B cell (primary cell): ENCODE measurements at regions of chr17 and their contacts with region 1.

Region 1: GRCh38 chr17:42997984-42998938 is at the start of gene RPL27:
- DNase-seq: peak; percentile 99
- ATAC-seq: peak; percentile 94
- H3K4me3 ChIP-seq: peak within 1 kb of the TSS; percentile 70 to 94 (median 84)
- H3K4me3 Mint-ChIP-seq: peak within 1 kb of the TSS; percentile 96
- H3K27ac ChIP-seq: peak within 1 kb of the TSS; percentile 89 to 96
- H3K27ac Mint-ChIP-seq: peak within 1 kb of the TSS; percentile 88
- H3K4me1 ChIP-seq: peaks cover 20 to 22% of the 10 kb centered on the region in 2 donors
- H3K4me1 Mint-ChIP-seq: peaks cover 37% of the 10 kb centered on the region
- H3K27me3 ChIP-seq: no peaks in the 10 kb centered on the region
- H3K27me3 Mint-ChIP-seq: no peaks in the 10 kb centered on the region
- CTCF ChIP-seq: peak; percentile 89
- total RNA-seq, gene RPL27: 925 and 1,087 TPM in 2 replicates

Region 2: GRCh38 chr17:42609182-42609813 is 389.0 kb before region 1 on chr17 and contains the starts of genes RETREG3 and TUBG1:
- CTCF ChIA-PET with region 1: no interaction called
- POLR2A ChIA-PET with region 1: no interaction called
- intact Hi-C with region 1: loop called (anchors 1 kb)
- DNase-seq: peak; percentile 100
- ATAC-seq: peak; percentile 91
- H3K4me3 ChIP-seq: peak within 1 kb of the TSS; percentile 73 to 95 (median 85)
- H3K4me3 Mint-ChIP-seq: peak within 1 kb of the TSS; percentile 100
- H3K27ac ChIP-seq: peak within 1 kb of the TSS; percentile 79 to 95
- H3K27ac Mint-ChIP-seq: peak within 1 kb of the TSS; percentile 98
- H3K4me1 ChIP-seq: peaks cover 38 to 42% of the 10 kb centered on the region in 2 donors
- H3K4me1 Mint-ChIP-seq: peaks cover 51% of the 10 kb centered on the region
- H3K27me3 ChIP-seq: no peaks in the 10 kb centered on the region
- H3K27me3 Mint-ChIP-seq: no peaks in the 10 kb centered on the region
- CTCF ChIP-seq: peak; percentile 37
- total RNA-seq, gene RETREG3: 103 and 108 TPM in 2 replicates
- total RNA-seq, gene TUBG1: 15.7 and 17.2 TPM in 2 replicates

Region 3: DNA sequence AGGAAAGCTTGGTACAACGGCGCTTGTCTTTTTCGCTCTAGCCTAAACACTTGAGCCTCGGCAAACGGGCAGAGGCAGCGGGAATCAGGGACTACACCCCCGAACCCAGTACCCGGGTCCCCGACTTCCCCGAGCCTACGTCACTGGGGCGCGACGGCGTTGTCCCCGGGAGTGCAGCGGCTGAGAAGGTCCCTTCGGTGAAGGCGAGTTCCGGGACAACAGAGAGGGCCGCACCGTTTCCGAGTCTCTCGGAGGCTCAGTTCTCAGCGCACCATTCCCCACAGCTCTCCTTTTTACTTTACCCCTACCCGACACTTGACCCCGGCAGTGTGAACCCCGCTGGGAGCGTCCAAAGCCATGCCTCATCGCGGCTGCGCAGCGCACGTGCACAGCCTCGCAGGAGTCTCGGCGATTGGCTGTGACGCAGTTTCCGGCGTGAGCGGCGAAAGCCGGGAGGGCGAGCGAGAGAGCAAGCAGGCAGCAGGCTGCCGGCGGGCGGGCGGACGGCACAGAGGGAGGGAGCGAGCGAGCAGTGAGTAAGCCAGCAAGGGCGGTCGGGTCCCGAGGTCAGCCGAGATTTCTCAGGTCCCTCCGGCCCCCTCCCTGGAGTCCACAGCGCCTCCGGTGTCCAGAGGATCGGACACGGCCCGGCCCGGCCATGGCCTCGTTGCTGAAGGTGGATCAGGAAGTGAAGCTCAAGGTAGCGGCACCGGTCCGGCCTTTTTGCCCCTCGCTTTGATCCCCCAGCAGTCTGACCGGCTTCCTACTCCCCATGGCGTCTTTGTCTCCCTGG is 165.1 kb before region 1 on chr17 and contains the start of gene PSME3:
- CTCF ChIA-PET with region 1: interaction called, 7 read pairs
- POLR2A ChIA-PET with region 1: interaction called, 3 read pairs
- intact Hi-C with region 1: loop called (anchors 1 kb)
- DNase-seq: peak; percentile 95
- ATAC-seq: peak; percentile 93
- H3K4me3 ChIP-seq: peak within 1 kb of the TSS; percentile 88 to 99 (median 92)
- H3K4me3 Mint-ChIP-seq: peak within 1 kb of the TSS; percentile 98
- H3K27ac ChIP-seq: peak within 1 kb of the TSS; percentile 84 to 94
- H3K27ac Mint-ChIP-seq: peak within 1 kb of the TSS; percentile 98
- H3K4me1 ChIP-seq: peaks cover 12 to 20% of the 10 kb centered on the region in 2 donors
- H3K4me1 Mint-ChIP-seq: peaks cover 24% of the 10 kb centered on the region
- H3K27me3 ChIP-seq: no peaks in the 10 kb centered on the region
- H3K27me3 Mint-ChIP-seq: no peaks in the 10 kb centered on the region
- CTCF ChIP-seq: no peak
- total RNA-seq, gene PSME3: 70.3 and 76.2 TPM in 2 replicates

Region 4: DNA sequence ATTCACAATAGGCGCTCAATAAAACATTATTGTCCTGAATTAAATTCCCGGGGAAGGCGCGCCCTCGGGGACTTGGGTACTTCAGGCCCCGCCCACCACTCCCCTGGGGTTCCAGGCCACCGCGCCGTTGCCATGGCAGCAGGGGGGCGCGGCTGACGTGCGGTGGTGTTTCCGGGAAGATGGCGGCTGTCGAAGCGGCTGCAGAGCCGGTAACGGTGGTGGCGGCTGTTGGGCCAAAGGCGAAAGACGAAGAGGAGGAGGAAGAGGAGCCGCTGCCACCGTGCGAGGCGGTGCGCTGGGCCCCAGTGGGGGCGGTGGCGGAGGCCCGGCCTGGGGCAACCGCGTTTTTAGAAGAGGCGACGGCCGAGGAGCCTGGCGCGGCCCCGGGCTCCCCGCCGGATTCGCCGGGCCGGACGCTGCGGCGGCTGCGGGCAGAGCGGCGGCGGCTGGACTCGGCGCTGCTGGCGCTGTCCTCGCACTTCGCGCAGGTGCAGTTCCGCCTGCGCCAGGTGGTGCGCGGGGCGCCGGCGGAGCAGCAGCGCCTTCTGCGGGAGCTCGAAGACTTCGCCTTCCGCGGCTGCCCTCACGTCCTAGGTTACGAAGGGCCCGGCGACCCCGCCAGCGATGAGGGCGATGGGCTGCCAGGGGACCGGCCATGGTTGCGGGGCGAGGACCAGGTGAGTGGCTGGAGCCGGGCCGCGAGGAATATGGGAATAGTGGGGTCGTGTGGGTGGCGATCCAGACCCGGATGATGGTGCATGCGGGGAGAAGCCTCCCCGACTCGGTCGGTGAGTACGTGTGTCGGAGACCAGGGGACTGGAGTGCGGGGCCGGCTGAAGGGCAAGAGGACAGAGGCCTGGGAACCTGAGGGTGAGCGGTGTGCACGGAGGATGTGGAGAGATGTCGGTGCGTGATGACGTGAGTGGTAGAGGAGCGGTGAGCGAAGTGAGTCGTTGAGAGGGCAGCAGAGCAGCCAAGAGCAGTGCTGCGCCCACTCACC is 17.6 kb before region 1 on chr17 and contains the start of gene RUNDC1:
- CTCF ChIA-PET with region 1: interaction called, 54 read pairs
- POLR2A ChIA-PET with region 1: interaction called, 24 read pairs
- intact Hi-C with region 1: loop called (anchors 1 kb)
- DNase-seq: peak; percentile 97
- ATAC-seq: peak; percentile 82
- H3K4me3 ChIP-seq: peak within 1 kb of the TSS; percentile 83 to 90 (median 88)
- H3K4me3 Mint-ChIP-seq: peak within 1 kb of the TSS; percentile 99
- H3K27ac ChIP-seq: peak within 1 kb of the TSS; percentile 80 to 86
- H3K27ac Mint-ChIP-seq: peak within 1 kb of the TSS; percentile 96
- H3K4me1 ChIP-seq: peaks cover 44 to 56% of the 10 kb centered on the region in 2 donors
- H3K4me1 Mint-ChIP-seq: peaks cover 48% of the 10 kb centered on the region
- H3K27me3 ChIP-seq: no peaks in the 10 kb centered on the region
- H3K27me3 Mint-ChIP-seq: no peaks in the 10 kb centered on the region
- CTCF ChIP-seq: peak; percentile 42
- total RNA-seq, gene RUNDC1: 43.7 and 45.6 TPM in 2 replicates

Region 5: DNA sequence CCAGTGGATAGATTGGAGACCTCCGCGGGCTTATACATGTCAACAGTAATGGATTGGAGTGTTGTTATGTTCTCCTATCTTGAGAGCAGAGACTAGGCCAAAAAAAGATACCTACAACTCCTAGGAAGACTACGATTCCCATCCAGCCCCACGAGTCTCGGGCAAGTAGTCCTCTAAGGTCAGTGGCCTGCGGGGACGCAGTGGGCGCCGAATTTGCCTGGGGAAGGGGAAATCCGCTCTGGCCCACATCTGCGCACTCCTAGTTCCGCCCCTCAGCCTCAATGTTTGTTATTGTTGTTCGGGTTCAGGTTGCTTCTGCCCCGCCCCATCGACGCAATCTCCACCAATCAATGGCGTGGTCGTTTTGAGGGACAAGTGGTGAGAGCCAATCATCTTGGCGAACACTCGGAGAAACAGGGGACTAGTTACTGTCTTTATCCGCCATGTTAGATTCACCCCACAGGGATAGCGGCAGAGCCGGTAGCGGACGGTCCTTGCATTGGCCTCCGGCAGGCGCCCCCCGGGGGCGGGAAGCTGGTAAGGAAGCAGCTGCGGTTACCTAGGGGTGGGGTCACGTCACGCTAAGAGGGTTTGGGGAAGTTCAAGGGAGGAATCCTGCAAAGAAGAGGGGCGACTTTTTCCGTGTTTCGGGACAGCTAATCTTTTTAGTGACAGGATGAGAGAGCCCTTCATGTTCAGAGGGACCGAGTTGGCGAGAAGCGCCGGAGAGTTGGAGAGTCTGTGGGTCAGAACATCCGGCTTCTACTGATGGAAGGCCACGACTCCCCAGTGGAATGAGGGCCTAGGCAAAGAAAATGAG is 172.7 kb after region 1 on chr17 and contains the start of gene NBR1:
- CTCF ChIA-PET with region 1: interaction called, 9 read pairs
- POLR2A ChIA-PET with region 1: interaction called, 12 read pairs
- intact Hi-C with region 1: no loop called
- DNase-seq: peak; percentile 99
- ATAC-seq: peak; percentile 77
- H3K4me3 ChIP-seq: peak within 1 kb of the TSS; percentile 70 to 99 (median 90)
- H3K4me3 Mint-ChIP-seq: no peak within 1 kb of the TSS
- H3K27ac ChIP-seq: peak within 1 kb of the TSS; percentile 100
- H3K27ac Mint-ChIP-seq: no peak within 1 kb of the TSS
- H3K4me1 ChIP-seq: peaks cover 20 to 39% of the 10 kb centered on the region in 2 donors
- H3K4me1 Mint-ChIP-seq: peaks cover 28% of the 10 kb centered on the region
- H3K27me3 ChIP-seq: no peaks in the 10 kb centered on the region
- H3K27me3 Mint-ChIP-seq: no peaks in the 10 kb centered on the region
- CTCF ChIP-seq: no peak
- total RNA-seq, gene NBR1: 42.1 and 43.9 TPM in 2 replicates

Region 6: DNA sequence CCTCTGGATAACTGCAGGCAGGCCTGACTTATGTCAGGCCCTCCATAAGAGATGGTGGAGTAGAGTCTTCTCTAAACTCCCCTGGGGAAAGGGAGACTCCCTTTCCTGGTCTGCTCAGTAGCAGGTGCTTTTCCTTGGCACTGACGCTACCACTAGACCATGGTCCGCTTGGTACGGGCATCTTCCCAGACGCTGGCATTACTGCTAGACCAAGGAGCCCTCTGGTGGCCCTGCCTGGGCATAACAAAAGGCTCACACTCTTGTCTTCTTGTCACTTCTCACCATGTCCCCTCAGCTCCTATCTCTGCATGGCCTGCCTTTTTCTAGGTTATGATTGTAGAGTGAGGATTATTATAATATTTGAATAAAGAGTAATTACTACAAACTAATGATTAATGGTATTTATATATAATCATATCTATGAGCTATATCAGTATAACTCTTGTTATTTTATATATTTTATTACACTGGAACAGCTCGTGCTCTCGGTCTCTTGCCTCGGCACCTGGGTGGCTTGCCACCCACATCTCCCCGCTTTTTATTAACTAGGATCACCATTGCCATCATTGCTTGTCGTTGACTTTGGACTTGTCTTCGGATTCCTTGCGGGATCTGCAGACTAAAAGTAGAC is 340.7 kb after region 1 on chr17:
- CTCF ChIA-PET with region 1: interaction called, 6 read pairs
- POLR2A ChIA-PET with region 1: interaction called, 4 read pairs
- intact Hi-C with region 1: loop called (anchors 2 kb)
- DNase-seq: peak; percentile 73
- ATAC-seq: no peak
- H3K4me3 ChIP-seq: no peak overlapping the region
- H3K4me3 Mint-ChIP-seq: no peak overlapping the region
- H3K27ac ChIP-seq: no peak overlapping the region
- H3K27ac Mint-ChIP-seq: no peak overlapping the region
- H3K4me1 ChIP-seq: peaks cover 9 to 19% of the 10 kb centered on the region in 2 donors
- H3K4me1 Mint-ChIP-seq: peaks cover 21% of the 10 kb centered on the region
- H3K27me3 ChIP-seq: no peaks in the 10 kb centered on the region
- H3K27me3 Mint-ChIP-seq: peaks cover 7% of the 10 kb centered on the region
- CTCF ChIP-seq: peak; percentile 86

Region 7: DNA sequence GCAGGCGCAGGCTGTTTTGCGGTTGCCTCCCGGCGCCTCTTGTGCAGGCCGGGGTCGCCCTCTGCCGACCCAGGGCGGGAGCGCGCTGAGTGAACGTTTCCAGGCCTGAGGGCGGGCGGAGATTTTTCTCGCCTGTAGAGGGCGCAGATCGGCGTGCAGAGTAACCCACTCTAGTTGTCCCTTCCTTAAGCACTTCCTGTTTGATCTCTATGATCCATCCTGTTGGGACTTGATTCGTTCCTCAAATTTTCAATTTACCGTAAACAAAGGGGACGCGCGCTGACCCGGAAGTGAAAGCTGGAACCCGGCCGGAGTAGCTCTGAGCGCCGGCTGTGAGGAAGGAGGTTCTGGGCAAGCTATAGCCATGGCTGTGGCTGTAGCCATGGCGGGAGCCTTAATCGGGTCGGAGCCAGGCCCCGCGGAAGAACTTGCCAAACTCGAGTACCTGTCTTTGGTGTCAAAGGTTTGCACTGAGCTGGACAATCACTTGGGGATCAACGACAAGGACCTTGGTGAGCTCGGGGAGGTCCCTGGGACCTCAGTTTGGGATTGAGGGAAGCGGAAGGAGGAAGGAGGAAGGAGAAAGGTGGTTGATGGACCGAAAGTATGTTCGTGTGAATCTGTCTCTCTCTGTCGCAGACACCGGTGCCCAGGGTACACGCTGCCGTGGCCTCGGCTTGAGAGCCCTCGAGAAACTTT is 485.6 kb after region 1 on chr17 and contains the start of gene DHX8:
- CTCF ChIA-PET with region 1: interaction called, 13 read pairs
- POLR2A ChIA-PET with region 1: interaction called, 7 read pairs
- intact Hi-C with region 1: loop called (anchors 1 kb)
- DNase-seq: peak; percentile 99
- ATAC-seq: peak; percentile 98
- H3K4me3 ChIP-seq: peak within 1 kb of the TSS; percentile 84 to 99 (median 98)
- H3K4me3 Mint-ChIP-seq: peak within 1 kb of the TSS; percentile 100
- H3K27ac ChIP-seq: peak within 1 kb of the TSS; percentile 82 to 86
- H3K27ac Mint-ChIP-seq: peak within 1 kb of the TSS; percentile 98
- H3K4me1 ChIP-seq: peaks cover 17 to 23% of the 10 kb centered on the region in 2 donors
- H3K4me1 Mint-ChIP-seq: peaks cover 29% of the 10 kb centered on the region
- H3K27me3 ChIP-seq: no peaks in the 10 kb centered on the region
- H3K27me3 Mint-ChIP-seq: no peaks in the 10 kb centered on the region
- CTCF ChIP-seq: peak; percentile 100
- total RNA-seq, gene DHX8: 63.3 and 64.4 TPM in 2 replicates